Caco-2 (cell line): ENCODE measurements at regions of chr9 and their contacts with region 1.

Region 1: DNA sequence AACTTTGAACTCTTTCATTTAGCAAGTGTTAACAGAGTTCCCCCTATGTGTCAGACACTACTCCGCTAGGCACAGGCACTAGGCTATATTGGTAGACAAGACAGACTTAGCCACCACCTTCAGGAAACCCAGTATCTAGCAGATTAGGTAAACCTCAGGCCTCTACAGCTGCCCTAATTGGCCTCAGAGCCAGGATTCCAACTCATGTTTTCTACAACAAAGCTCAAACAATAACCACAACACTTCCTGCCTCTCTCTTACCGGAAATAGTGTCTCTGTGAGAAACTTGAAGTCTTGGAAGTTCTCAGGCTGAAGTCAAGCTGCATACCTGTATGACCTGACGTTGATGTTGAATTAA is 116.6 kb upstream of the SLC44A1 start:
- DNase-seq: no peak
- H3K4me3 ChIP-seq: no peak overlapping the region
- H3K4me3 Mint-ChIP-seq: no peak overlapping the region
- H3K27ac Mint-ChIP-seq: no peak overlapping the region
- H3K4me1 ChIP-seq: peaks cover 14% of the 10 kb centered on the region
- H3K4me1 Mint-ChIP-seq: peaks cover 14% of the 10 kb centered on the region
- H3K27me3 ChIP-seq: no peaks in the 10 kb centered on the region
- H3K27me3 Mint-ChIP-seq: no peaks in the 10 kb centered on the region
- CTCF ChIP-seq: no peak

Region 2: DNA sequence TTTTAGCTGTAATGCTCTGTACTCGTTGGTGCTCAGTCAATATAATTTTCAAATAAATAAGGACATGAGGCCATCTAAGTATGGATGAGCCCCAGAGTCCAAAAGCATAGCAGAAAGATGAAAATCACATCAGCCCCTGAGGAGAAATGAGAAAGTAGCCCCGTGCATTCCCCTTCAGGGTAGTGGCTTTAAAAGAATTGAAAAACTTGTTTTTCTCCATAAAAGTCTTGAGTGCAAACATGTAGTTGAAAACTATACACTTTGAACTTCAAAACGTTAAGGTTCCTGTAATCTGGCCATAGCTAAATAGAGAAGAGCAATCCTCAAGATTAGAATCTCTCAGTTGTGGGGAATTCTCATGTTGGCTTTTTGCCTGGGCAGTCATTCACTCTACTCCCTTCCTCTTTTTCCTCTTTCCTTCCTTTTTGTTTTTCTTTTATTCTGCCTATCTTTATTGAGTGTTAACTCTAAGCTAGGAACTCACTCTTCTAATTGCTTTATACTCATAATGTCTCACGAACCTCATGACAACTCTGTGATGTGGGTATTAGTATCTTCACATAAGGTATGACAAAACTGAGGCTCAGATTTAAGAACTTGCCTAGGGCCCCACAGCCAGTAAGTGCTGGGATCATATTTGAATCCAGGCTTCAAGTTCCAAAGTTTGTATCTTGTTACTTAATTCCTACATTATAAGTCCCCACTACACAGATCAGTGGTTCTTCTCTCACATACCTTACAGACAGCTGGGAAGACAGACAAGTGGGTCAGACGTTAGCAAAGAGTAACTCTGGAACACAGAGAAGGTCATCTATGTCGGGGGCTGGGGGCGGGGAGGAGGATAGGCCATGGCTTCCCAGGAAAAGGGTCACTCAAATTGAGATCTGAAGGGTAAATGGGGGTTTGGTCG is 153.5 kb before region 1 on chr9:
- CTCF ChIA-PET with region 1: no interaction called
- POLR2A ChIA-PET with region 1: no interaction called
- intact Hi-C with region 1: no loop called
- DNase-seq: no peak
- H3K4me3 ChIP-seq: no peak overlapping the region
- H3K4me3 Mint-ChIP-seq: no peak overlapping the region
- H3K27ac Mint-ChIP-seq: no peak overlapping the region
- H3K4me1 ChIP-seq: peaks cover 45% of the 10 kb centered on the region
- H3K4me1 Mint-ChIP-seq: peaks cover 59% of the 10 kb centered on the region
- H3K27me3 ChIP-seq: no peaks in the 10 kb centered on the region
- H3K27me3 Mint-ChIP-seq: no peaks in the 10 kb centered on the region
- CTCF ChIP-seq: no peak

Region 3: DNA sequence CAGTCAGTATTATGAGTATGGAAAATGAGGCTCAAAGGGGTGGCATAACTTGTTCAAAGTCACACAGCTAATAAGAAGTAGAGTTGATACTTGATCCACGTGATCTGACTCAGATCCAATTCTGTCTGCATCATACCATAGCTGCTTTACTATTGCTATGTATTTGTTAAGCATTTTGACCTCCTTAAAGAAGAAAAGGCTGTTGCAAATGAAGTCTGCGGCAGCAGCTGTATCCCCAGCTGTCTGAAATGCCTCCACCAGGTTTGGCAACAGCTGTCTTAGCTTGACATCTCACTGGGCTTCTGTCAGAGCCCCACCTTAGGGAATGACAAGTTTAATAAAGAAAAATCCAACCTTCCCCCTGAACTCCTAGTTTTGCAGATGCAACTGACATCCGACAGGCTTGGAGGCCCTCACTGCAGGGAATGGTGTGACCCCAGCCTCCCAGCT is 41.1 kb after region 1 on chr9:
- CTCF ChIA-PET with region 1: no interaction called
- POLR2A ChIA-PET with region 1: no interaction called
- intact Hi-C with region 1: loop called (anchors 1 kb)
- DNase-seq: no peak
- H3K4me3 ChIP-seq: no peak overlapping the region
- H3K4me3 Mint-ChIP-seq: no peak overlapping the region
- H3K27ac Mint-ChIP-seq: no peak overlapping the region
- H3K4me1 ChIP-seq: no peaks in the 10 kb centered on the region
- H3K4me1 Mint-ChIP-seq: peaks cover 11% of the 10 kb centered on the region
- H3K27me3 ChIP-seq: no peaks in the 10 kb centered on the region
- H3K27me3 Mint-ChIP-seq: no peaks in the 10 kb centered on the region
- CTCF ChIP-seq: no peak